ENCODE measurements at regions of chr11 and their contacts with region 1.

Region 1: GRCh38 chr11:122309262-122309925 is 193.4 kb upstream of the BLID start:
- DNase-seq: no peak
- ATAC-seq: peak; percentile 83 to 97 (median 95)
- H3K4me3 ChIP-seq: peak overlapping the region; percentile 54
- H3K27ac ChIP-seq: peak overlapping the region; percentile 77
- H3K4me1 ChIP-seq: peaks cover 12% of the 10 kb centered on the region
- H3K27me3 ChIP-seq: no peaks in the 10 kb centered on the region
- CTCF ChIP-seq: no peak

Region 2: DNA sequence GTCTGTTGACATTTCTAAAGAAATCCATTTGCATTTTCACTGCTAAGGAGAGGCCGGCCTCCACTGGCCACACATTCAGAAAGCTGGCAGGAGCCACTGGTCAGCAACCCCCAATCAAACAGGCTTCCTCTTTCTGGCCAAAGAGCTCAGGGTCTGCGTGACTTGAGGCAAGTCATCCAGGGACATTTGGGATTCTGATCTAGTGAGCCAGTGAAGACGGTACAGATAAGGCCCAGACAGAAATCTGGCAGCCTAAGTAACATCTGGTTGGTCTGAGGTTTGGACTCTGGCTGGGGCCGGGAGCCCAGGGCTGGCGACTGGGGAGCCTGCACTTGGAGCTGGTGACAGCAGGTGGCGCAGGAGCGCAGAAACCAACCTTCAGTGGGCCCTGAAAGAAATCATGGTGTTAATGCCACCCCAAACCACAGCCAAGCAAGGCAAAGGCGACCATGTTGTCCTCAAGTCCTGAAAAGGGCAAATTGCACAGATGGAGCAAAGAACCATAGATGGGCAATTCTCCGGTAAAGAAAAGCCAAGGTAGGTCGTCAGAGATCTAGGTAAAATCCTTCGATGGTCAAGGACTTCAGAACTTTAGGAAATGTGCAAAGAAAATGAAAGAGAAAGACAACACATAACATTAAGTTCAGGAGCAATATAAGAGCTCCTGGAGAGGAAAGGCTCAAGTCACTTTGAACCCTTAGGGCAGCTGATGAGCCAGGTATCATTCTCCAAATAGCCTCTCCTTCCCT is 94.0 kb before region 1 on chr11:
- intact Hi-C with region 1: loop called in 1 of 2 experiments (anchors 5 kb)
- DNase-seq: peak; percentile 78 to 89
- ATAC-seq: peak; percentile 94 to 98 (median 98)
- H3K4me3 ChIP-seq: no peak overlapping the region
- H3K27ac ChIP-seq: peak overlapping the region; percentile 64
- H3K4me1 ChIP-seq: peaks cover 12% of the 10 kb centered on the region
- H3K27me3 ChIP-seq: no peaks in the 10 kb centered on the region
- CTCF ChIP-seq: peak; percentile 92